ENCODE measurements at regions of chr9 and their contacts with region 1.

Region 1: GRCh38 chr9:97873877-97874276 is 20.9 kb downstream of the FOXE1 start:
- DNase-seq: peak; percentile 60 to 69
- H3K4me3 ChIP-seq: no peak overlapping the region
- H3K27ac ChIP-seq: peak overlapping the region; percentile 13; the same call in 1 of the 2 replicates
- H3K4me1 ChIP-seq: peaks cover 28% of the 10 kb centered on the region
- H3K27me3 ChIP-seq: no peaks in the 10 kb centered on the region
- CTCF ChIP-seq: no peak

Region 2: GRCh38 chr9:97703437-97704344 is 170.2 kb before region 1 on chr9:
- CTCF ChIA-PET with region 1: no interaction called
- POLR2A ChIA-PET with region 1: interaction called, 11 read pairs
- intact Hi-C with region 1: loop called (anchors 2 kb)
- DNase-seq: peak; percentile 71 to 83
- H3K4me3 ChIP-seq: peak overlapping the region; percentile 46; the same call in 1 of the 2 replicates
- H3K27ac ChIP-seq: peak overlapping the region; percentile 91
- H3K4me1 ChIP-seq: peaks cover 38% of the 10 kb centered on the region
- H3K27me3 ChIP-seq: no peaks in the 10 kb centered on the region
- CTCF ChIP-seq: no peak

Region 3: DNA sequence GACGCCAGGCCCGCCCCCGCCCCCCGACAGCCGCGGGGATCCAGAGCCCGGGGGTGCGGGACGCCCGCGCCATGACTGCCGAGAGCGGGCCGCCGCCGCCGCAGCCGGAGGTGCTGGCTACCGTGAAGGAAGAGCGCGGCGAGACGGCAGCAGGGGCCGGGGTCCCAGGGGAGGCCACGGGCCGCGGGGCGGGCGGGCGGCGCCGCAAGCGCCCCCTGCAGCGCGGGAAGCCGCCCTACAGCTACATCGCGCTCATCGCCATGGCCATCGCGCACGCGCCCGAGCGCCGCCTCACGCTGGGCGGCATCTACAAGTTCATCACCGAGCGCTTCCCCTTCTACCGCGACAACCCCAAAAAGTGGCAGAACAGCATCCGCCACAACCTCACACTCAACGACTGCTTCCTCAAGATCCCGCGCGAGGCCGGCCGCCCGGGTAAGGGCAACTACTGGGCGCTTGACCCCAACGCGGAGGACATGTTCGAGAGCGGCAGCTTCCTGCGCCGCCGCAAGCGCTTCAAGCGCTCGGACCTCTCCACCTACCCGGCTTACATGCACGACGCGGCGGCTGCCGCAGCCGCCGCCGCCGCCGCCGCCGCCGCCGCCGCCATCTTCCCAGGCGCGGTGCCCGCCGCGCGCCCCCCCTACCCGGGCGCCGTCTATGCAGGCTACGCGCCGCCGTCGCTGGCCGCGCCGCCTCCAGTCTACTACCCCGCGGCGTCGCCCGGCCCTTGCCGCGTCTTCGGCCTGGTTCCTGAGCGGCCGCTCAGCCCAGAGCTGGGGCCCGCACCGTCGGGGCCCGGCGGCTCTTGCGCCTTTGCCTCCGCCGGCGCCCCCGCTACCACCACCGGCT is 19.8 kb before region 1 on chr9:
- CTCF ChIA-PET with region 1: no interaction called
- POLR2A ChIA-PET with region 1: interaction called, 4 read pairs
- intact Hi-C with region 1: loop called (anchors 2 kb)
- DNase-seq: peak in 1 of 2 experiments; percentile 53
- H3K4me3 ChIP-seq: peak overlapping the region; percentile 64
- H3K27ac ChIP-seq: peak overlapping the region; percentile 56; the same call in 1 of the 2 replicates
- H3K4me1 ChIP-seq: peaks cover 6% of the 10 kb centered on the region; the same call in 1 of the 2 replicates
- H3K27me3 ChIP-seq: no peaks in the 10 kb centered on the region
- CTCF ChIP-seq: no peak

Region 4: GRCh38 chr9:98108531-98109031 is 234.7 kb after region 1 on chr9:
- CTCF ChIA-PET with region 1: no interaction called
- POLR2A ChIA-PET with region 1: no interaction called
- intact Hi-C with region 1: no loop called
- DNase-seq: no peak
- H3K4me3 ChIP-seq: no peak overlapping the region
- H3K27ac ChIP-seq: no peak overlapping the region
- H3K4me1 ChIP-seq: no peaks in the 10 kb centered on the region
- H3K27me3 ChIP-seq: no peaks in the 10 kb centered on the region
- CTCF ChIP-seq: no peak

Region 5: DNA sequence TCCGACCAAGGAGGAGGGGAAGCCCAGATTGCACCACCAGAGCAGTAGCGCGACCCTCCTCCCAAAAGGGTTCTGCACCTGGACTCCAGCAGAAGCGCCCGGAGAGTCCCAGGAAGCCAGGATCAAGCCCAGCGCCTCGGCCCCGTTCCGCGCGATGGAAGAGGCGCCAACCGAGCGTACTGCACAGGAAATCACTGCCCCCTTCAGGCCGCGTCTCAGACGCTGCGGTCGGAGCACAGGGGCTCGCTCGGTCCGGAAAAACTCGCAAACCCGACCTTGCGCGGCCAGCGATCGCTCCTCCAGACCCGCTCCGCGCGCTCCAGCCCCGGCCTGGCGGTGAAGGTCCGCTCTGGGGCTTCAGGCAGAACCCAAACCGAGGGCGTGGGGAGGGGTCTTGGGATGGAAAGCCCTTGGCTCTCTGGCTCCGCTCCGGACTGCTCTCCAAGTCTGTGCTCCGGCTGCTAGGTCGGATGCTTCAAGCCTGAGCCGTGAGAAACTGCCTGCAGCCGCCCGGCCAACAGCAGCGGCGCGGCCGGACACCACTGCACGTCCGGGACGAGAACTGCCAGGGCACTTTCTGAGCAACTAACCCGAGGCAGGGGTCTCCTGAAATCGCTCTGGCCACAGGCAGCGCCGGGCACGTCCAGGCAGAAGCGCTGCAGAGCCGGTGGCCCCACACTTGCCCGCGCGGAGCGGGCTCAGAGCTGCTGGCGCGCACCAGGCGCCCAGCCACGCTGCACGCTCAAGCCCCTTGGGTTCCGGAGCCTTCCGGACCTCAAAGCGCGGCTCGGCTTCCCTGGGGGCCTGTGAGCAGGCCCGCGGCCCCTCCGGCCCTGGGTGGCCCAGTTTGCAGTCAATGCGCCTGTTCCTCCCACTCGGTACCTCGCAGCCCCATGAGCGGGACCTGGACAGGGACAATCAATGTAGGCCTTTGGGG is 833.6 kb after region 1 on chr9:
- CTCF ChIA-PET with region 1: no interaction called
- POLR2A ChIA-PET with region 1: no interaction called
- intact Hi-C with region 1: no loop called
- DNase-seq: peak; percentile 69 to 81
- H3K4me3 ChIP-seq: peak overlapping the region; percentile 60
- H3K27ac ChIP-seq: peak overlapping the region; percentile 46; the same call in 1 of the 2 replicates
- H3K4me1 ChIP-seq: peaks cover 6% of the 10 kb centered on the region
- H3K27me3 ChIP-seq: peaks cover 22% of the 10 kb centered on the region
- CTCF ChIP-seq: peak; percentile 70

Measured in PC-9 (cell line).